ENCODE measurements at regions of chr9 and their contacts with region 1.

Region 1: DNA sequence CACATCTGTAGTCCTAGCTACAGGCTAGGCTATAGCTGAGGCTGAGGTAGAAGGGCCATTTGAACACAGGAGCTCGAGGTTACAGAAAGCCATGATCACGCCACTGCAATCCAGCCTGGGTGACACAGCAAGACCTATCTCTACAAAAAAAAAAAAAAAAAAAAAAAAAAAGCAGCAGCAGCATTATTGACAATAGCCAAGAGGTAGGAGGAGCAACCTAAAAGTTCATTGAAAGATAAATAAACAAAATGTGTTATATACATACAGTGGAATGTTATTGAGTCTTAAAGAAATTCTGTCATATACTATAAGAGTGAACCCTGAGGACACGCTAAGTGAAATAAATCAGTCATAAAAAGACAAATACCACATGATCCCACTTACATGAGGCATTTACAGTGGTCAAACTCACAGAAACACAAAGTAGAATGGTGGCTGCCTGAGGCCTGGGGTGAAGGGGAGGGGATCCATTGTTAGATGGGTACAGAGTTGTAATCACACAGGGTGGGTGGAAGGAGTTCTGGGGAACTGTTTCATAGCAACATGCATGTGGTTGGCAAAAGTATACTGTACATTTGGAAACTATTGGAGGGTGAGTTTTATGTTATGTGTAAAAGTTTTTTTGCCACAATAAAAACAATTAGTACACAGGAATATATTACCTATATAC is 77.2 kb downstream of the MLLT3 start:
- DNase-seq: no peak
- H3K4me3 ChIP-seq: no peak overlapping the region
- H3K27ac ChIP-seq: no peak overlapping the region
- H3K4me1 ChIP-seq: no peaks in the 10 kb centered on the region
- H3K27me3 ChIP-seq: no peaks in the 10 kb centered on the region

Region 2: DNA sequence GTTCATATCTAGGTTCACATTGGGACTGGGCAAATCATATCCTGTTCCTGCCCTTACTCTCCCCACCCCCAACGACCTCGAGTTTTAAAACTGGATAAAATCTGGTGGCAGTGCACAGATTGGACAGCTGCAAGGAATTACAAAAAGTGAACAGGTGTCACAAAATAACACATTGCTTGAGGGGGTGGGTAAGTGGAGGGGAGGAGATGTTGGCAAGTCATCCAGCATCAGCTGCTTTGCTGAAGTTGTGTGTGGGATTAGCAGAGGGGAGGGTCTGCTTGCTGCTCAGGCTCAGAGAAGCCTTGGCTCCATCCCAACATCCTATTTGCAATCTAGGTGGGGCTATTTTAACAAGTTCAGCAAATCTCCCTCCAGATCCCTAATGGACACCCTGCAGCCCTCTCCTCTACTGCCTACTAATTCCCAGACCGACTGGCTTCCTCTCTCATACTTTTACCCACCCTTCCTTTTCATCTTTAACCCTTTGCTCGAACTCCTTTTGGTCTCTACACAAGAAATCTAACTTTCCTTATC is 716.4 kb before region 1 on chr9:
- in situ Hi-C with region 1: no loop called
- DNase-seq: no peak
- H3K4me3 ChIP-seq: no peak overlapping the region
- H3K27ac ChIP-seq: no peak overlapping the region
- H3K4me1 ChIP-seq: no peaks in the 10 kb centered on the region
- H3K27me3 ChIP-seq: no peaks in the 10 kb centered on the region

Region 3: GRCh38 chr9:20479419-20480155 is 65.5 kb before region 1 on chr9:
- in situ Hi-C with region 1: loop called (anchors 10 kb)
- DNase-seq: peak; percentile 17
- H3K4me3 ChIP-seq: no peak overlapping the region
- H3K27ac ChIP-seq: no peak overlapping the region
- H3K4me1 ChIP-seq: peaks cover 5% of the 10 kb centered on the region; the same call in 1 of the 2 replicates
- H3K27me3 ChIP-seq: no peaks in the 10 kb centered on the region

Region 4: GRCh38 chr9:20771729-20772128 is 226.6 kb after region 1 on chr9:
- in situ Hi-C with region 1: no loop called
- DNase-seq: no peak
- H3K4me3 ChIP-seq: no peak overlapping the region
- H3K27ac ChIP-seq: no peak overlapping the region
- H3K4me1 ChIP-seq: no peaks in the 10 kb centered on the region
- H3K27me3 ChIP-seq: no peaks in the 10 kb centered on the region

Measured in GM23248 (cell line).